ENCODE measurements at regions of chr16 and their contacts with region 1.

Region 1: GRCh38 chr16:47141773-47142485 is 1.8 kb downstream of the NETO2 start:
- DNase-seq: peak; percentile 96
- H3K4me3 Mint-ChIP-seq: peak overlapping the region; percentile 84
- H3K27ac Mint-ChIP-seq: peak overlapping the region; percentile 51
- H3K4me1 Mint-ChIP-seq: peaks cover 34% of the 10 kb centered on the region
- H3K27me3 Mint-ChIP-seq: peaks cover 18% of the 10 kb centered on the region

Region 2: GRCh38 chr16:46658925-46659324 is 483.0 kb before region 1 on chr16:
- intact Hi-C with region 1: no loop called
- DNase-seq: peak; percentile 67
- H3K4me3 Mint-ChIP-seq: peak overlapping the region; percentile 40
- H3K27ac Mint-ChIP-seq: peak overlapping the region; percentile 82
- H3K4me1 Mint-ChIP-seq: peaks cover 12% of the 10 kb centered on the region
- H3K27me3 Mint-ChIP-seq: no peaks in the 10 kb centered on the region

Region 3: GRCh38 chr16:46689365-46690280 is 452.3 kb before region 1 on chr16 and contains the start of gene ORC6:
- intact Hi-C with region 1: loop called (anchors 2 kb)
- DNase-seq: peak; percentile 99
- H3K4me3 Mint-ChIP-seq: no peak within 1 kb of the TSS
- H3K27ac Mint-ChIP-seq: no peak within 1 kb of the TSS
- H3K4me1 Mint-ChIP-seq: peaks cover 34% of the 10 kb centered on the region
- H3K27me3 Mint-ChIP-seq: no peaks in the 10 kb centered on the region
- total RNA-seq, gene ORC6: 64.3 and 66.3 TPM in 2 replicates

Region 4: DNA sequence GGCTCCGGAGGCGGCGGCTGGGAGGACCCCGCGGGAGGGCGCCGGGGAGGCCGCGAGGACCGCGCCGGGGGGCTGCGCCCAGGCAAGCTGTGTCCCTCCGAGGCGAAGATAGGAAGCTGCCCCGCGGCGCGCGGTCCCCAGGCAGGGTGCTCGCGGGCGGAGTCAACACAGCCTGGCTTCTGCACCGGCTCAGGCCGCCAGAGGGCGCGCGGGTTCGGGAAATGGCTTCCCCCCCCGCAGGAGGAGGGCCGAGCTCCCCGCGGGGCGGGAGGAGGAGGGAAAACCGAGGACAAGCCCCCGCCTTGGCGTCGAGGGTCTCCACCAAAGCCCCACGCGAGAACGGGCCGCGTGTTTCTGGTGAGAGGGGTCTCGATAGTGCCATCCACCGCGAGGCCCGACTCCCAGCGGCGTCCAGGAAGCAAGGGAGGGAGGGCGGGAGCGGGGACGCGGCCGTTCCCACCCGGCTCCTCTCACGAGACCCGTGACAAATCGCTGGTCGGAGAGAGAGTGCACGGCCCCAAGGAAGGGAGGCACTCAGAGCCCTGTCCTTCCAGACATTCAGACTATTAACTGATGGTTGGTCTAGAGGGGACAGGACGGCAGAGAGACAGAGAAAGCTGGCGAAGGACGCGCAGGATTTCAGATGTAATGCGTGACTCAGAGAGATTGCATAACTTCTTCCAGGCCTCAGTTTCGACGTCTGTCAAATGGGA is 104.0 kb before region 1 on chr16:
- intact Hi-C with region 1: loop called (anchors 2 kb)
- DNase-seq: peak; percentile 97
- H3K4me3 Mint-ChIP-seq: peak overlapping the region; percentile 82
- H3K27ac Mint-ChIP-seq: no peak overlapping the region
- H3K4me1 Mint-ChIP-seq: peaks cover 4% of the 10 kb centered on the region
- H3K27me3 Mint-ChIP-seq: peaks cover 14% of the 10 kb centered on the region

Region 5: DNA sequence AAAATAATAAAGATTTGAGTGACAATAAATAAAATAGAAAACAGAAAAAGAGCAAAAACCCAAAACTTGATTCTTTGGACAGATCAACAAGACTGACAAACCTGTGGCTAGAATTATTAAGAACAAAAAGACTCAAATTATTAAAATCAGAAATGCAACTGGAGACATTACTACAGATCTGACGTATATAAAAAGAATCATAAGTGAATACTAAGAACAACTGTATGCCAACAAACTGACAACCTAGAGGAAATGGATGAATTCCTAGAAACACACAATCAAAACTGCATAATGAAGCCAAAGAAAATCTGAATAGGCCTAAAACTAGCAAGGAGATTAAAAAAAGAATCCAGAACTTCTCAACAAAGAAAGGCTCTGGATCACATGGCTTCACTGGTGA is 45.6 kb before region 1 on chr16:
- intact Hi-C with region 1: no loop called
- DNase-seq: no peak
- H3K4me3 Mint-ChIP-seq: no peak overlapping the region
- H3K27ac Mint-ChIP-seq: no peak overlapping the region
- H3K4me1 Mint-ChIP-seq: peaks cover 4% of the 10 kb centered on the region
- H3K27me3 Mint-ChIP-seq: no peaks in the 10 kb centered on the region

Region 6: DNA sequence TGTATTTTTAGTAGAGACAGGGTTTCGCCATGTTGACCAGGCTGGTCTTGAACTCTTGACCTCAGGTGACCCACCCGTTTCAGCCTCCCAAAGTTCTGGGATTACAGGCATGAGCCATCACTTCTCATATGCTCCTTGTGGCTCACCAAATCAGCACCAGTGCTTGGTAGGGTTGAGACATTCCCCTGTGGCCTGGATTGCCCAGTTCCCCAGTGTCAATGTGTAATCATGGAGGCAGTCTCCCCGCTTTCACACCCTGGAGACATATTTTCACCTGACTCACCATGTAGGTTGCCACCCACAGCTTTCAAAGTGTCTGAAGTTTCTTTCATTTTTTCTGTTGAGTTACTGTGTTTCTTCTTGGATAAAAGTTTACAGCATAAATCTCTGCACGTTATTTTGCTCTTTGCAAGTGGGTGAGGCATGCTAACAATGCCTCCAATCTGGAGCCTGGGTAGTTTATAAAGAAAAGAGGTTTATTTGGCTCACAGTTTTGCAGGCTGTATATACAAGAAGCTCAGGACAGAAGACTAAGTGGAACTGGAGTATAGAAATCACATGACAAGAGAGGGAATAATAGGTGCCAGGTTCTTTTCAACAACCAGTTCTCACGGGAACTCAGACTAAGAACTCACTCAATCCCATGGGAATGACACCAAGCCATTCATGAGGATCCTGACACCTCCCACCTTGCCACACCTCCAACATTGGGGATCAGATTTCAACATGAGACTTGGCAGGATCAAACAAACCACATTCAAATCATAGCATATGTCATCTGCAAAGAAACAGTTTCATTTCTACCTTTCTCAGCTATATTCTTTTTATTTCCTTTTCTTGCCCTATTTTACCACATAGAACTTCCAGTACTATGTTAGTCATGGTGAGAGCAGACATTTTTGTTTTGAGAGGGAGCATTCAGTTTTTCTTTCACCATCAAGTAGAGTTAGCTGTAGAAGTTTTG is 432.4 kb after region 1 on chr16:
- intact Hi-C with region 1: loop called (anchors 10 kb)
- DNase-seq: peak; percentile 72
- H3K4me3 Mint-ChIP-seq: peak overlapping the region; percentile 53
- H3K27ac Mint-ChIP-seq: peak overlapping the region; percentile 38
- H3K4me1 Mint-ChIP-seq: peaks cover 55% of the 10 kb centered on the region
- H3K27me3 Mint-ChIP-seq: no peaks in the 10 kb centered on the region

Region 7: DNA sequence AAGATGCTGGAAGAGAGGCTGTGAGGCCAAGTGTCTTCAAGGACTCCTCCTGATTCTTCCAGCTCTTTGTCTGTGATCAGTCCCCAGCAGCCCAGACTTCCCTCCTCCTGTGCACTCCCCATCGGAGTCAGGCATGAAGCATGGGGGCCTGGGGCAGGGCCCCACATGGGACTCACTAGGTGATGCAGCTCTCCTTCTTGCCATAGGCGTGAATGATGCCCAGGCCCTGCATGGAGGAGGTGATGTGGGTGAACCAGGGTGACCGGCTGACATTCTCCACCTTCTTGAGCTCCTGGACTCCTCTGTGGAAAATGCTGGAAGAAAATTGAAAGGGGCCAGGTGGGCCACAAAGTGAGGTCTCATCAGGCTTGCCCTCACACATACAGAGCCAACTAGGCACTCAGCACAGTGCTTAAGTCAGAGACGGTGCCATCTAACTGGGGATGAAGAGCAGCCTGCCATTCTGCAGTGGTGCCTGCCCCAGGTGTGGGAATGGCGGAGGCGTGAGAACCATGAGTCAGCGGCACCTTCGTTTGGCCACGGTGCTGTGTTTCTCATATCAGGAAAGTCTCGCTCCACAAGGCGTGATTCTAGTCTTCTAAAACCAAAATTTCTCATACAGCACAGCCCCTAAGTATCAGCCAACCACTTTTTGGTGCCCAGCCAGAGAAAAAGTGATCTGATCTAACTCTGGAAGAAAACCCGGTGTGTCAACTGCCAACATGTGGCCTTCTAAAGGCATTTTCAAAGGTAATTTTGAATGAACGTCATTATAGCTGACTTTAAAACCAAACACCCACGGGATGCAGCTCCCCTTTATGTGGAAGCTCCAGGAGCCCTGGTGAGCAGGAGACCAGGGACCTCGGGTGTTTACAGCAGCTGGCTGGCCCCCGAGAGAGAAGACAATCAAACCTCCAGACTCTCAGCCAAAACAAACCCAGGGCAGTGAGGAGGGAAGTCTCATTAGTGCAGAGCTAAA is 959.1 kb after region 1 on chr16:
- intact Hi-C with region 1: loop called (anchors 5 kb)
- DNase-seq: no peak
- H3K4me3 Mint-ChIP-seq: no peak overlapping the region
- H3K27ac Mint-ChIP-seq: no peak overlapping the region
- H3K4me1 Mint-ChIP-seq: peaks cover 11% of the 10 kb centered on the region
- H3K27me3 Mint-ChIP-seq: peaks cover 11% of the 10 kb centered on the region

Region 8: DNA sequence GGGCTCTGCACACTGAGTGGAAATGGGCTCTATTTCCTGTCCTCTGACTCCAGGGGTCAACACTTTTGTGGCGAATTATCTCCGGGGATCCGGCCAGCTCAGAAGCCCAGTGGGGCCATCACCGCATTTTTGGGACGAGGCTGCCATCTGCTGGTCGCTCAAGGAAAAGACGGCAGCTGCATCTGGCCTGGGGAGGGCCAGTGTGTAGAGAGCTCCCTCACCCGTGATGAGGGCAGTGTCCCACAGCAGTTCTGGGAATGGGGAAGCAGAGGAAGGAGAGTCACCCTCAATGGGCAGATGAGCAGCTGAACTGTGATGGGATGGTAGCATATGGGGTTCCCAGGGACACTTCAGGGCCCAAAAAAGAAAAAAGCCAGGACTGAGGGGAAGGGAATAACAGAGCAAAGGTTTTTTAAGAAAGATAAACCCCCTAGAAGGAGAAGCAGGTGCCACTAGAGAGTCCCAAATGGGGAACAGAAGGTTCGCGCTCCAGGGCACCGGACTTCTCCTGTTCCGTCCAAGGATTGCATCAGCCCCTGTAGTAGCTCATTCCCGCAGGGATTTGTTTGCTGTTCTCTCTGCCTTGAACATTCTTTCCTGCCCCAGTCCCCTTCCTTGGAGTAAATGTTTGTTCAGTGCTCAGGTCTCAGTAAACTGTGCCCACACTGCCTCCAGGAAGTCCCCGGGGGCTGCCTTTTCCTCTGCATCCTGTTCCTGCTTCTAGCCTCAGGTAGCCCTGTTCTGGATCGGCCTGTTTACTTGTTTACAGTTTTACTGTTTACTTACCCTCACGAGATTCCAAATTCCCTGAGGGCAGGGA is 1023.2 kb after region 1 on chr16:
- intact Hi-C with region 1: loop called (anchors 2 kb)
- DNase-seq: peak; percentile 90
- H3K4me3 Mint-ChIP-seq: no peak overlapping the region
- H3K27ac Mint-ChIP-seq: peak overlapping the region; percentile 64
- H3K4me1 Mint-ChIP-seq: peaks cover 15% of the 10 kb centered on the region
- H3K27me3 Mint-ChIP-seq: peaks cover 9% of the 10 kb centered on the region